Posterior cingulate gyrus (tissue), 11 donors: ENCODE measurements at regions of chr9 and their contacts with region 1.

Region 1: GRCh38 chr9:4740638-4741364 is at the start of gene AK3:
- DNase-seq: peak; percentile 69 to 97 (median 82)

Region 2: DNA sequence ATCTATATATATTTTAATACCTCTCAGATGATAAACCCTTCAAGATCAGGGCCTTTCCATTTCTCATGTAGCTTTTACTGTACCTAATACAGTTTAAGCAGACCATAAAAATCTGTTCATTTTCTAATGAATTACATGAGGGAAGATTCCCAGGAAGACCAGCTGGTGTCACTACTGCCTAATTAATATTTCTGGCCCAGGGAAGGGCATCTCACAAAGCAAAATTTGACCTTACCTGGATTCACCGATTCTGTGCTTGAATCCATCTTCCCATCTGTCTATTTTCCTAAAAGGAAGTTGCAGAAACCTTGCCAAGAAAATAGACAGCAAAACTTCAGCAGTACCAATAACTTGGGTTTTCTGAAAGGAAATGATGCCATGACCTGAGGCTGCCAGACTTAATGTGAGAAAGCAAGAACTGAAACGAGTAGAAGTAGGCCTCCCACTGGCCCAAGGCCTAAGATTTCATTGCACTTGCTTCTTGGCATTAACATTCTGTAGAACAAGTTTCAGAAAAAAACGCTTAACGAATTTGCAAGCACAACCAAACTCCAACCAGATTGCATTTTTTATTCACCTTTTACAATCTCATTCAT is 358.0 kb before region 1 on chr9:
- intact Hi-C with region 1: loop called (anchors 10 kb)
- DNase-seq: no peak

Region 3: DNA sequence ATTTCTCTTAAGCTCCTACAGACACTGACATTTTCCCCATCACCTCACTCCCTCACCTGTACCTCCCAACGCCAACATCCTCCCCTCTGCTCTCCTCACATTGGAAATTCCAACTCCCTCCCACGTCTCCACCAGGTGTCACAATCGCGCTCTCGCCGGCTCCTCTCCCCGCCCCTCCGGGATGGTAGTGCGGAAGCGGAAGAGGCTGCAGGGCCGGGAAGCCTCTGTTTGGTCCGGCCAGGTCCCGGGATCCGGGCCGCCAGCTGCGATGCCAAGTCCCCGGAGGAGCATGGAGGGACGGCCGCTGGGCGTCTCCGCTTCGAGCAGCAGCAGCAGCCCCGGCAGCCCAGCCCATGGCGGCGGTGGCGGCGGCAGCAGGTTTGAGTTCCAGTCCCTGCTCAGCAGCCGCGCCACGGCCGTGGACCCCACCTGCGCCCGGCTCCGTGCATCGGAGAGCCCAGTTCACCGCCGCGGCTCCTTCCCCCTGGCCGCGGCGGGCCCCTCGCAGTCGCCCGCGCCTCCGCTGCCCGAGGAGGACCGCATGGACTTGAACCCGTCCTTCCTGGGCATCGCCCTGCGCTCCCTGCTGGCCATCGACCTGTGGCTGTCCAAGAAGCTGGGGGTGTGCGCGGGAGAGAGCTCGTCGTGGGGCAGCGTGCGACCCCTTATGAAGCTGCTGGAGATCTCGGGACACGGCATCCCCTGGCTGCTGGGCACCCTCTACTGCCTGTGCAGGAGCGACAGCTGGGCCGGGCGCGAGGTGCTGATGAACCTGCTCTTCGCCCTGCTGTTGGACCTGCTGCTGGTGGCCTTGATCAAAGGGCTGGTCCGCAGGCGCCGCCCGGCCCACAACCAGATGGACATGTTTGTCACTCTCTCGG is 78.5 kb before region 1 on chr9 and contains the start of gene PLPP6:
- intact Hi-C with region 1: loop called (anchors 5 kb)
- DNase-seq: peak; percentile 74 to 97 (median 83)

Region 4: DNA sequence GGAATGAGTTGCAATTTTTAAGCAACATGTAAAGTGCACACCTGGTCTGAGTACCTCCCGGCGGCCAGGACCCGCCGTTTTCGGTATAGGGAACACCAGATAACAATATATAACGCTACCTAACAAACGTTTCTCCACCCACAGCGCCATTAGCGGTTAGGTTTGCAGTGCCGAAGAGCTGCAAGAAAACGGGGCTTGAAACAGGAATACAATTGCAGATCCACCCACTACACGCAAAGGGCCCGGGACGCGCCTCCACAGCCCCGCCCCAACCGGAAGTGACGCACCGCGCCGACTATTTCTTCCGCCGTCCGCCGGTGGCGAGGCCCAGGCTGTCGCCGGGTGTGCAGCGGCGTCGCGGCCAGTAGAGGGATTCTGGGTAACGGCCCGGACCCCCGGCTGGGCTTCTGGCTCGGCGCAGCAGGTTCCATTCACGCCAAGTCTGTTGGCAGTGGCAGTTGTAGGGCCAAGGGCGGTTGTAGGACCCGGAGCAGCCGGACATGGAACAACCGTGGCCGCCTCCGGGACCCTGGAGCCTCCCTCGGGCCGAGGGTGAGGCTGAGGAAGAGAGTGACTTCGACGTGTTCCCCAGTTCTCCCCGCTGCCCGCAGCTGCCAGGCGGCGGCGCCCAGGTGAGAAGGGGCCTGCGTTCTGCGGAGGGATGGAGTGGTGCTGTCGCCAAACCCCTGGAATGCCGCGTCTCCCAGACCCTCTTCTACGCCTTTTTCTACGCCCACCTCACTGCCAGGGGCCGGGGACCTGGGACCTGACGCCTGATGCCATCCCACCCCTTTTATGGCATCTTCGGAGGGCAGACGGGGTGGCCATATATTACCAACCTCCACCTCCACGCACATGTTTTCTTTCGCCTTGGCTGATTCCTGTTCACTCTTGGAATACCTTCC is 61.3 kb before region 1 on chr9 and contains the start of gene CDC37L1:
- intact Hi-C with region 1: loop called (anchors 2 kb)
- DNase-seq: peak; percentile 96 to 100 (median 98)

Region 5: DNA sequence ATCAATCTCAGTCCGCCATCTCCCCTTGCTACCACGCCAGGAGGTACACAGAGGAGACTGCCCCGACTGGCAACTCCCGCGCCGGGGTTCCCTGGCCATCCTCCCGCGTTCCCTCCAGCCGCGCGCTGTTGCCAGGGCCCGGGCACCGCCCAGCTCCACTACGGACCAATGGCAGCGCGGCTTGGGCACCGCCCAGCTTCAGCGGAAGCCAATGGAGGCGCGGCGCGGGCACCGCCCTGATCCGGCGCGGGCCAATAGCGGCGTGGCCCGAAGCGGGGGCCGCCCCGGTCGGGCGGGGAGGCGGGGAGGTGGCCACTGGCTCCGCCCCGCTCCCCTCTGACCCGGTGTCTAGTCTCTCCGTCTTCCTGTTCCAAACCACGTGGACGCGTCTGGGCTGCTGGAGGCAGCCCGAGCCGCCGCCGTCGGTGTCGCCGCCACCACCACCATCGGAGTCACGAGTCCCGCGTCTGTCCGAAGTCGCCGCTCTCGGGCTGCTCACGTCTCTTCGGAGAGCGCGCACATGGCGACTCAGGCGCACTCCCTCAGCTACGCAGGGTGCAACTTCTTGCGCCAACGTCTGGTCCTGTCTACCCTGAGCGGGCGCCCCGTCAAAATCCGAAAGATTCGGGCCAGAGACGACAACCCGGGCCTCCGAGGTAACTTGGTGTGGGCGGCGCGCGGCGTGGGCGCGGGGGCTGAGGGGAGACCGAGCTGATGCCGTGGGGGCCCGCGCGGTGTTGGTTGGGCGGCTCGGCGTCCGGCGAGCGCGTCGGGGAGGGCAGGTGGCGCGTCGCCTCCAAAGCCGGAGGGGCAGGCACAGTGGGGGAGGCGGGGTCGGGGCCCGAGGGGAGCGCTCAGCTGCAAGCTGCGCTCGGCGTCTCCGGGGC is 52.0 kb after region 1 on chr9 and contains the start of gene RCL1:
- intact Hi-C with region 1: loop called (anchors 10 kb)
- DNase-seq: peak; percentile 95 to 100 (median 98)